ENCODE measurements at regions of chr6 and their contacts with region 1.

Region 1: DNA sequence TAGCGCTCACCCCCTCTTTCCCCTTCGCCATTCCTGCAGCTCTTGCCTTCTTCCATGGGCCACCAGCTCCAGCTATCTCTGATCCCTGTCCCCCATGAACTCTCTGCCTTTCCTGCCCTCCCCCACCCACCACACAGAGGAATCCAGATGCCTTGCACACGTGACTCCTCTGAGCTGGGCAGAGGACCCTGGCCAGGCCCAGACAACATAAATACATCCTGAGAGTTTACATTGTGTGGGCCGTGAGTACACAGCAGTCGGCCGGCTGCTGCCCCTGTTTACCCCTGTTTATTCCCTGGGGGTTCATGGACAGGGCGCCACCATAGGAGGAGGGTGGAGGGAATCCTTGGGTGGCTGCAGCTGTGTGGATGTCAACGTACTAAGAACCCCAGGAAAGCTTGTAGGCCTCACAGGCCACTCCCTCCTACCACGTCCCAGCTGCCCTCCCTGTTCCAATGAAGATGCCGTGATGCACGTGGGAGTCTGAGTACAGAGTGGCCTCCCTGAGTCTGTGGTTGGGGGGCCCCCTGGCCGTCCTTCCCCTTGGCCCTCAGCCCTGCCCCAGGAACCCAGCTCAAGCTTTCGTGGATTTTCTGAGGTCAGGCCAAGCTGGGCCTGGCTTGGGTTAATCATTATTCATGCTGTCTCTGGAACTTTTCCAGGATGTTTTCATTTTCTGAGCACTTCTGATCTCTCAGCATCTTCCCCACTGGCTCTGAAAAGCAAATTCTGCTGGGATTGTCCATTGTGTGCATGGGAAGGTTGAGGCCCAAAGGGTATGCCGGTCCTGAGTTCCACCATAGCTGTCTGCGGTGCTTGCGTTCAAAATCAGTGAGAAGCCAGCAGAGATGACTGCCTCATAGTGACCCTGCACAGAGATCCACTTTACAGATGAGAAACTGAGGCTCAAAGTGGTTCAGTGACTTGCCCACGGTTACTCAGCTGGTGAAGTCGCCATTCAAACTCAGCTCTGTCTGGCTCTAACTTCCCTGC is 136.3 kb downstream of the MRPL14 start:
- DNase-seq: peak in 1 of 2 donors; percentile 58
- ATAC-seq: no peak
- H3K4me3 ChIP-seq: no peak overlapping the region
- H3K27ac ChIP-seq: peak overlapping the region; percentile 90 to 100 (median 99)
- H3K4me1 ChIP-seq: peaks cover 54 to 64% of the 10 kb centered on the region in 2 donors
- H3K27me3 ChIP-seq: no peaks in the 10 kb centered on the region
- CTCF ChIP-seq: no peak
- POLR2A ChIP-seq: peak in 1 of 2 donors; percentile 6

Region 2: DNA sequence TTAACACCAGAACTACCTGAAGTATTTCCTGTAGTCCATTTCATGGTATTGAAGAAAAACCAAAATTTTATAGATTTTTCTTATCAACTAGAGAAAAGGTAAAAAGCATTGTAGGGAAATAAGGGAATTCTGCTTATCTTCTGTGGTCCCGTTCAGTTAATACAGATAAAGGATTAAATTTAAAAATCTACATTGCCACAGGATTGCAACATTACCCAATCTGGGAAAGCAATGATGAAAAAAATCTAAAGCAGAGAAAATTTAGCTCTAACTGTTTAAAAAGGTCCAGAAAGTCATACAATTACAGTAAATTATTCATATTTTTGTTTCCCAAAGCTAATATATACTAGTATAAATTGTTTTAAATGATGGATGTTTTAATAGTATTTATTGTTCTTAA is 397.0 kb before region 1 on chr6:
- in situ Hi-C with region 1: no loop called
- intact Hi-C with region 1: no loop called
- DNase-seq: no peak
- ATAC-seq: no peak
- H3K4me3 ChIP-seq: no peak overlapping the region
- H3K27ac ChIP-seq: no peak overlapping the region
- H3K4me1 ChIP-seq: no peaks in the 10 kb centered on the region
- H3K27me3 ChIP-seq: no peaks in the 10 kb centered on the region
- CTCF ChIP-seq: no peak
- POLR2A ChIP-seq: no peak

Region 3: GRCh38 chr6:43673444-43674084 is 317.4 kb before region 1 on chr6:
- in situ Hi-C with region 1: no loop called
- intact Hi-C with region 1: loop called (anchors 2 kb)
- DNase-seq: peak in 1 of 2 donors; percentile 79
- ATAC-seq: no peak
- H3K4me3 ChIP-seq: no peak overlapping the region
- H3K27ac ChIP-seq: peak overlapping the region; percentile 95 to 97 (median 96)
- H3K4me1 ChIP-seq: peaks cover 88 to 96% of the 10 kb centered on the region in 2 donors
- H3K27me3 ChIP-seq: no peaks in the 10 kb centered on the region
- CTCF ChIP-seq: no peak
- POLR2A ChIP-seq: no peak

Region 4: GRCh38 chr6:43776115-43776798 is 214.7 kb before region 1 on chr6:
- in situ Hi-C with region 1: no loop called
- intact Hi-C with region 1: loop called (anchors 2 kb)
- DNase-seq: peak in 1 of 2 donors; percentile 72
- ATAC-seq: peak in 1 of 2 donors; percentile 7
- H3K4me3 ChIP-seq: peak overlapping the region in 2 of 4 donors; percentile 4 to 90
- H3K27ac ChIP-seq: peak overlapping the region; percentile 94 to 100 (median 98)
- H3K4me1 ChIP-seq: peaks cover 56 to 59% of the 10 kb centered on the region in 2 donors
- H3K27me3 ChIP-seq: no peaks in the 10 kb centered on the region
- CTCF ChIP-seq: no peak
- POLR2A ChIP-seq: no peak

Region 5: GRCh38 chr6:43798688-43799444 is 192.1 kb before region 1 on chr6:
- in situ Hi-C with region 1: no loop called
- intact Hi-C with region 1: loop called (anchors 2 kb)
- DNase-seq: peak; percentile 98 to 99
- ATAC-seq: peak; percentile 88 to 91
- H3K4me3 ChIP-seq: no peak overlapping the region
- H3K27ac ChIP-seq: peak overlapping the region; percentile 91 to 96 (median 92)
- H3K4me1 ChIP-seq: peaks cover 47 to 59% of the 10 kb centered on the region in 2 donors
- H3K27me3 ChIP-seq: no peaks in the 10 kb centered on the region
- CTCF ChIP-seq: peak in 1 of 5 experiments; percentile 34
- POLR2A ChIP-seq: peak; percentile 88 to 94

Region 6: GRCh38 chr6:43926634-43927524 is 64.0 kb before region 1 on chr6:
- in situ Hi-C with region 1: no loop called
- intact Hi-C with region 1: no loop called
- DNase-seq: no peak
- ATAC-seq: no peak
- H3K4me3 ChIP-seq: no peak overlapping the region
- H3K27ac ChIP-seq: no peak overlapping the region
- H3K4me1 ChIP-seq: no peaks in the 10 kb centered on the region
- H3K27me3 ChIP-seq: no peaks in the 10 kb centered on the region
- CTCF ChIP-seq: no peak
- POLR2A ChIP-seq: no peak

Region 7: GRCh38 chr6:44002593-44003344 is 11.8 kb after region 1 on chr6:
- in situ Hi-C with region 1: no loop called
- intact Hi-C with region 1: loop called (anchors 1 kb)
- DNase-seq: peak; percentile 39 to 78
- ATAC-seq: peak; percentile 22 to 36
- H3K4me3 ChIP-seq: peak overlapping the region; percentile 36 to 49 (median 44)
- H3K27ac ChIP-seq: peak overlapping the region; percentile 83 to 93 (median 88)
- H3K4me1 ChIP-seq: peaks cover 36 to 45% of the 10 kb centered on the region in 2 donors
- H3K27me3 ChIP-seq: no peaks in the 10 kb centered on the region
- CTCF ChIP-seq: peak in 4 of 5 experiments; percentile 8 to 36 (median 29)
- POLR2A ChIP-seq: peak; percentile 63 to 70

Region 8: GRCh38 chr6:44226368-44227146 is 235.6 kb after region 1 on chr6:
- in situ Hi-C with region 1: no loop called
- intact Hi-C with region 1: loop called (anchors 5 kb)
- DNase-seq: peak in 1 of 2 donors; percentile 66
- ATAC-seq: peak; percentile 20 to 37
- H3K4me3 ChIP-seq: peak overlapping the region; percentile 31 to 51 (median 42)
- H3K27ac ChIP-seq: peak overlapping the region; percentile 95 to 99 (median 98)
- H3K4me1 ChIP-seq: peaks cover 76 to 84% of the 10 kb centered on the region in 2 donors
- H3K27me3 ChIP-seq: no peaks in the 10 kb centered on the region
- CTCF ChIP-seq: no peak
- POLR2A ChIP-seq: no peak

Region 9: DNA sequence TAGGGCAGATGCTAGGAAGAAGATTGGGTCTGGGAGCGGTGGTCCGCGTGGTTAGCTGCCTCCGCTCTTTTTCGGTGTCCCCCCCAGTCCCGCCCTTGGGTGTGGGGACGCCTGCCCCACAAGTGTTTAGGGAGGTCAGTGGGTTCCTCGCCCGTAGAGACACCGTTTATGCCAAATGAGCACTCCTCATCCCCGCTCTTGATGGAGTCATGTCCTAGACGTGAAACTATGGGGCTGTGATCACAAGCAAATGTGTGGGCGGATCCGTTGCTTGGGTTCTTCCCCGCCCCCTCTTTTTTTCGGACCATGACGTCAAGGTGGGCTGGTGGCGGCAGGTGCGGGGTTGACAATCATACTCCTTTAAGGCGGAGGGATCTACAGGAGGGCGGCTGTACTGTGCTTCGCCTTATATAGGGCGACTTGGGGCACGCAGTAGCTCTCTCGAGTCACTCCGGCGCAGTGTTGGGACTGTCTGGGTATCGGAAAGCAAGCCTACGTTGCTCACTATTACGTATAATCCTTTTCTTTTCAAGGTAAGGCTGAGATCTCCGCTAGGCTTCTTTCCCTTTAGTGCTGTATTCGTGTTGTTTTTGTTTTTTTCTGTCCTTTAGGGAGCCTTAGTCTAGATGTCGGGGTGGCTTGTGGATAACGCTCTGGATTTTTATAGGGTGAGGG is 255.9 kb after region 1 on chr6 and contains the start of gene HSP90AB1:
- in situ Hi-C with region 1: no loop called
- intact Hi-C with region 1: no loop called
- DNase-seq: peak; percentile 97 to 99
- ATAC-seq: peak; percentile 86 to 88
- H3K4me3 ChIP-seq: peak within 1 kb of the TSS; percentile 78 to 98 (median 88)
- H3K27ac ChIP-seq: peak within 1 kb of the TSS; percentile 93 to 99 (median 98)
- H3K4me1 ChIP-seq: peaks cover 25 to 27% of the 10 kb centered on the region in 2 donors
- H3K27me3 ChIP-seq: no peaks in the 10 kb centered on the region
- CTCF ChIP-seq: peak in 1 of 5 experiments; percentile 26
- POLR2A ChIP-seq: peak; percentile 99
- total RNA-seq, gene HSP90AB1: 878 to 1,576 (median 1,106) TPM

Measured in gastrocnemius medialis (tissue), 4 donors.